Activated CD4-positive, alpha-beta memory T cell treated with anti-CD3 and anti-CD28 coated beads for 36 hours (primary cell): ENCODE measurements at regions of chr14 and their contacts with region 1.

Region 1: DNA sequence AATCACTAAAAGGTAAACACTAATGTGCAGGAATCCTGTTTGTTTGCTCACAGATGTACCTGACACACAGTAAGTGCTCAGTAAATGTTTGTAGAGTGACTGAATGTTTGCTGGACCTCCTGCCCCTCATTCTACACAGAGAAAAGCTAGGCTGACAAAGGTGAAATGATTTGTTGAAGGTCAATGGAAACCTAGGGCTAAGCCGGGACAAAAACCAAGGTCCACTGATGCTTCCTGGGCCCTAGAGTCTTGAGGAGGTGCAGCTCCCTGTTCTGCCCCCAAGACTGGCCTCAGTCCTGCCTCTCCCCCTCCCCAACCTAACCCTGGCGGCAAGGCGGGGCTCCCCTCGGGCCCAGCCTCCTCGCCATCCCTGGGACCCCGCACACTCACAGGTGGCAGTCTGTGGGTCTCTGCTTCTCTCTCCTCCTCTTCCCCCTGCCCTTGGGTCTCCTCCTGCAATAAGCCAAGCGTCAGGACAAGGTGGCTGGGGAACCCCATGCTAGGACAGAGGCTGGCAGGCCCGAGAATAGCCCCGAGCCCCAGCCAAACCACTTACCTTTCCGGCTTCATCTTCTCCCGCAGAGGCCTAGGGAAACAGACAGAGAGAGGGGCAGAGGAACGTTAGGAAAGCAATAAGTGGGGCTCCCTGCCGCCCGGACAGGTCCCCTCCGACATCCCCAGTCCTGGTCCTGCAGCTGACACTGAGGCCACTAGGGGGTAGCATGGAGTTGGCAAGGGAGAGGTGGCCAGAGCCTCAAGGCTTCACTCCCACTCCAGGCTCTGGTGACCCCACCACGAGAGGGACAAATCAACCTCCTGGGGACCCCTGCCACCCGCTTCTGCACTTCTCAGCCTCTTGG is 9.3 kb downstream of the PGF start:
- DNase-seq: peak; percentile 84
- H3K4me3 Mint-ChIP-seq: no peak overlapping the region
- H3K27ac Mint-ChIP-seq: no peak overlapping the region
- H3K4me1 Mint-ChIP-seq: peaks cover 25% of the 10 kb centered on the region
- H3K27me3 Mint-ChIP-seq: no peaks in the 10 kb centered on the region

Region 2: DNA sequence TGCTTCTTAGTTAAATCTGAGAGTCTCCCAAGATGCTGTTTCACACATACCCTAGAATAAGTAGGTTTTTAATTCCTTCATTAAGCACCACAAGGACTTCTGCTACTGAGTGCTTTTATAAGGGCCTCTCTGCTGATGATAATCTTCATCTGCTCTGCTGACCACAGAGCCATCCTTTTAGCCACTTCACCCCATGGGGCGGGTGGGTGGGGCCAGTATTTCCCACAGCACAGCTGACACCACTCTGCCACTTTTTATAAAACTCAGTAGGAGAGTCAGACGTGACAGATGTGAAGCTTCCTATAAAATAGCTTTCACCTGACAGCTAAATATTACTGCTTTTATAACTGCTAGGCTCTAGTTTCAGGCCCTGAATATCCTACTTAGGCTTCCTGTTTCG is 212.8 kb before region 1 on chr14:
- CTCF ChIA-PET with region 1: no interaction called
- POLR2A ChIA-PET with region 1: no interaction called
- intact Hi-C with region 1: no loop called
- DNase-seq: no peak
- H3K4me3 Mint-ChIP-seq: no peak overlapping the region
- H3K27ac Mint-ChIP-seq: no peak overlapping the region
- H3K4me1 Mint-ChIP-seq: no peaks in the 10 kb centered on the region
- H3K27me3 Mint-ChIP-seq: no peaks in the 10 kb centered on the region

Region 3: GRCh38 chr14:74922739-74923401 is 23.2 kb before region 1 on chr14 and contains the start of gene RPS6KL1:
- CTCF ChIA-PET with region 1: interaction called, 18 read pairs
- POLR2A ChIA-PET with region 1: no interaction called
- intact Hi-C with region 1: no loop called
- DNase-seq: peak; percentile 82
- H3K4me3 Mint-ChIP-seq: peak within 1 kb of the TSS; percentile 57
- H3K27ac Mint-ChIP-seq: no peak within 1 kb of the TSS
- H3K4me1 Mint-ChIP-seq: peaks cover 8% of the 10 kb centered on the region
- H3K27me3 Mint-ChIP-seq: peaks cover 7% of the 10 kb centered on the region
- total RNA-seq, gene RPS6KL1: 4.2 to 4.9 TPM

Region 4: GRCh38 chr14:74932401-74932901 is 13.6 kb before region 1 on chr14:
- CTCF ChIA-PET with region 1: interaction called, 30 read pairs
- POLR2A ChIA-PET with region 1: no interaction called
- intact Hi-C with region 1: no loop called
- DNase-seq: no peak
- H3K4me3 Mint-ChIP-seq: peak overlapping the region; percentile 4
- H3K27ac Mint-ChIP-seq: no peak overlapping the region
- H3K4me1 Mint-ChIP-seq: peaks cover 14% of the 10 kb centered on the region
- H3K27me3 Mint-ChIP-seq: peaks cover 3% of the 10 kb centered on the region

Region 5: DNA sequence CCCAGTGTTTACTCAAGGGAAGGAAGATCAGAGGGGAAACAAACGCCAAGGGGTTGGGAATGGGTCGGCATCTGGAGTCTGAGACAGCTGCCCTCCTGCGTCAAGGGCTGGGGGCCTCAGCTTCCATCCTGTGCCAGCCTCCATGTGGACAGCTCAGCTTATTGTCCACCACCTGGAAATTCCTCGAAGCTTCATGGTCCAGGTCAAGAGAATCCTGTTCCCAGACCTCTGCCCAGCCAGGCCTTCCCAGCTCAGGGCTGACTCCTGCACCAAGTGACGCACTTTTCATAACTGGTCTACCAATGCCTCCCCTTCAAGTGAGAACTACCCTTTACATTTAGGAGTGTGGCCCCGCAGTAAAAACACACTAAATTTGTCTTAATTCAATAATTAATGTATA is 24.8 kb after region 1 on chr14:
- CTCF ChIA-PET with region 1: interaction called, 10 read pairs
- POLR2A ChIA-PET with region 1: no interaction called
- intact Hi-C with region 1: no loop called
- DNase-seq: no peak
- H3K4me3 Mint-ChIP-seq: no peak overlapping the region
- H3K27ac Mint-ChIP-seq: no peak overlapping the region
- H3K4me1 Mint-ChIP-seq: no peaks in the 10 kb centered on the region
- H3K27me3 Mint-ChIP-seq: no peaks in the 10 kb centered on the region

Region 6: DNA sequence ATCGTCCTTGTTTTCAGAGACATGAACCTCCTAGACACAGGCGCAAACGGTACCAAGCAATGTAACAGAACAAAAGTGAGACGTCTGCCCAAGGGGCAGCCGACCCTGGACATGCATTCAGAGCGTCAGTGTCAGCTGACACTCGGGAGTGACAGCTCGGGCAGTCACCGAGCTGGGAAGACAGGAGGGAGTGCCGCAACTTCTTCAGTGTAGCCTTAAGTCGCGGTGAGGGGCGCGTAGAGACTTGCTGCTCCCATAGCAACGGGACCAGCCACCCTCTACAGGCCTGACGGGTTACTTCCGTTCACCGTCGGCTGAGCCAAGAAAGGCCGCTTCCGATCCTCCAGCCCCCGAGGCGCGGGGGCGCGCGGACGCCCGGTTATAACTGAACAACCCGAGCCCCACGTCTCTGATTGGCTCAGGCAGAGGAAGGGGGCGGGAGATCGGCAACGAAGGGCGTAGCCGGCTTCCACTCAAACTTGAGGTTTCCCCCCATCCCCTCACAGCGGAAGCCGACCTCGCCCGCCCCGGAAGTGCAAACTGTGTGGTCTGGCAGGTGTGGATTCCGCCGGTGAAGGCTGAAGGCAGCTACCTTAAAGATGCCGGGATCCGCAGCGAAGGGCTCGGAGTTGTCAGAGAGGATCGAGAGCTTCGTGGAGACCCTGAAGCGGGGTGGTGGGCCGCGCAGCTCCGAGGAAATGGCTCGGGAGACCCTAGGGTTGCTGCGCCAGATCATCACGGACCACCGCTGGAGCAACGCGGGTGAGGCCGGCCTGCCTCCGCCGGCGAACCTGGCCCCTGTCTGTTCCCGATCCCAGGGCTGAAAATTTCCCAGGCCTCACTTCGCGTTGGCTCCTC is 56.6 kb after region 1 on chr14 and contains the start of gene EIF2B2:
- CTCF ChIA-PET with region 1: interaction called, 5 read pairs
- POLR2A ChIA-PET with region 1: no interaction called
- intact Hi-C with region 1: loop called (anchors 5 kb)
- DNase-seq: peak; percentile 100
- H3K4me3 Mint-ChIP-seq: peak within 1 kb of the TSS; percentile 98
- H3K27ac Mint-ChIP-seq: peak within 1 kb of the TSS; percentile 79
- H3K4me1 Mint-ChIP-seq: peaks cover 34% of the 10 kb centered on the region
- H3K27me3 Mint-ChIP-seq: no peaks in the 10 kb centered on the region
- total RNA-seq, gene EIF2B2: 61.9 to 62.6 TPM

Region 7: GRCh38 chr14:75230140-75231045 is 284.3 kb after region 1 on chr14:
- CTCF ChIA-PET with region 1: no interaction called
- POLR2A ChIA-PET with region 1: no interaction called
- intact Hi-C with region 1: no loop called
- DNase-seq: peak; percentile 76
- H3K4me3 Mint-ChIP-seq: no peak overlapping the region
- H3K27ac Mint-ChIP-seq: no peak overlapping the region
- H3K4me1 Mint-ChIP-seq: peaks cover 46% of the 10 kb centered on the region
- H3K27me3 Mint-ChIP-seq: no peaks in the 10 kb centered on the region

Region 8: DNA sequence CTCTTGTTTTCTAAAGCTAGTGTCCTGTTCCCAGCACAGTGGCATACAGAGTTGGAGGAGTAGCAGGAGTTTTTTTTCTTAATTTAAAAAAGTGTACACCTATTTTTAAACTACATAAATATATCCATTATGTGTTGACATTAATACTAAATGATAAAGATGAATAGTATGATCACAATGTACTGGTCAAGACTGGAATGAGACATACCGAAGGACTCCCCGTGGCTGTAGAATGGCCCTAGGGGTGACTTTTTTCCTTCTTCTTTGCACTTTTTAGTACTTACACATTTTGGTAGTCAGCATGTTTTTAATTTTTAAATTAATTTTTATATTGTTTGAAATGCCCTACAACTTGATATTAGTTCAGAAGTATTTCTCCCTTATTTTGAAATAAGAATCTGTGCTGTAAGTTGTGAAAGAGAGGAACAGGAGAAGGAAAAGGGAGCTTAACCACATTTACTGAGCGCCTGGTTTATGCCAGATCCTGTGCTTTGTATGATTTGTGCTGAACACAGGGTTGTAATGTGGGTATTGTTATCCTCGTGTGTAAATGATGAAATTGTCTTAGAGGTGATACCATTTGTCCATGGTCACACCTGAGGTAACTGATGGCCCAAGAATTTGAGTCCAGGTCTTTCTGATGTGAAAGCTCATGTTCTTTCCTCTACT is 899.2 kb after region 1 on chr14:
- CTCF ChIA-PET with region 1: no interaction called
- POLR2A ChIA-PET with region 1: no interaction called
- intact Hi-C with region 1: no loop called
- DNase-seq: no peak
- H3K4me3 Mint-ChIP-seq: no peak overlapping the region
- H3K27ac Mint-ChIP-seq: no peak overlapping the region
- H3K4me1 Mint-ChIP-seq: no peaks in the 10 kb centered on the region
- H3K27me3 Mint-ChIP-seq: no peaks in the 10 kb centered on the region